ENCODE measurements at regions of chr7 and their contacts with region 1.

Region 1: DNA sequence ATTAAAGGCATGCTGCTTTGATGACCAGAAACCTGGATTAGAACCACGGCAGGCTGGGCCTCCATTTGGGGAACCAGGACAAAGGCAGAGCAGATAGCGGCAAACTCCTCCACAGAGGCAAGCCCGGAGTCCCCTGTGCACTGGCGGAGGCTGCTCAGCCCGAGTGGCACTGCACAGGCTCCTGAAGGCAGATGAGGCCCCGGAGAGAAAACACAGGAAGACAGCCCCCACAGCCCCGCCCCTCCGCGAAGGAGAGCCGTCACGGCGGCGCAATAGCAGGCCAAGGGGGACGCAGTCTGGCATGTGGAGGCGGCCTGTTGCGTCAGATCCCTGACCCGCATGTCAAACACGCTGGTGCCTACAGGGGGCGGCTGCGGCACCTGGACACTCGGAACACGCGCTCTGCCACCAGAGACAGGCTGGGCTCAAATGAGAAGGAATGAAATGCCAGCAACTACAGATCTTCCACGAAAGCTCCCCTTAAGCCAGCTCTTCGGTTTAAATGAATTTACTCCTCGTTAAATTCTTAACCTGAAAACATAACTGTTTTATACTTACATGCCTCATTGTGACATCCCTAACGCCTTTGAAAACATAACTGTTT is 128.5 kb downstream of the MAD1L1 start:
- DNase-seq: peak; percentile 90 to 96
- ATAC-seq: peak; percentile 82 to 96 (median 90)
- H3K4me3 ChIP-seq: peak overlapping the region; percentile 44
- H3K27ac ChIP-seq: peak overlapping the region; percentile 3
- H3K4me1 ChIP-seq: peaks cover 31% of the 10 kb centered on the region
- H3K27me3 ChIP-seq: no peaks in the 10 kb centered on the region
- CTCF ChIP-seq: peak; percentile 79

Region 2: GRCh38 chr7:2046581-2047565 is 57.3 kb before region 1 on chr7:
- intact Hi-C with region 1: no loop called
- DNase-seq: peak; percentile 5 to 32
- ATAC-seq: no peak
- H3K4me3 ChIP-seq: no peak overlapping the region
- H3K27ac ChIP-seq: no peak overlapping the region
- H3K4me1 ChIP-seq: peaks cover 10% of the 10 kb centered on the region
- H3K27me3 ChIP-seq: no peaks in the 10 kb centered on the region
- CTCF ChIP-seq: no peak

Region 3: GRCh38 chr7:2195400-2196246 is 91.4 kb after region 1 on chr7:
- intact Hi-C with region 1: loop called (anchors 5 kb)
- DNase-seq: peak; percentile 42 to 77
- ATAC-seq: peak; percentile 52 to 68 (median 58)
- H3K4me3 ChIP-seq: no peak overlapping the region
- H3K27ac ChIP-seq: peak overlapping the region; percentile 56
- H3K4me1 ChIP-seq: peaks cover 58% of the 10 kb centered on the region
- H3K27me3 ChIP-seq: no peaks in the 10 kb centered on the region
- CTCF ChIP-seq: no peak

Region 4: GRCh38 chr7:2258661-2259365 is 154.6 kb after region 1 on chr7:
- intact Hi-C with region 1: no loop called
- DNase-seq: no peak
- ATAC-seq: no peak
- H3K4me3 ChIP-seq: no peak overlapping the region
- H3K27ac ChIP-seq: no peak overlapping the region
- H3K4me1 ChIP-seq: no peaks in the 10 kb centered on the region
- H3K27me3 ChIP-seq: no peaks in the 10 kb centered on the region
- CTCF ChIP-seq: no peak